Dendritic cell treated with granulocyte-macrophage colony-stimulating factor and Interleukin-4, amounts not matched to agents 40 ng/mL and 50 ng/mL, for 4 days (primary cell): ENCODE measurements at regions of chr7 and their contacts with region 1.

Region 1: DNA sequence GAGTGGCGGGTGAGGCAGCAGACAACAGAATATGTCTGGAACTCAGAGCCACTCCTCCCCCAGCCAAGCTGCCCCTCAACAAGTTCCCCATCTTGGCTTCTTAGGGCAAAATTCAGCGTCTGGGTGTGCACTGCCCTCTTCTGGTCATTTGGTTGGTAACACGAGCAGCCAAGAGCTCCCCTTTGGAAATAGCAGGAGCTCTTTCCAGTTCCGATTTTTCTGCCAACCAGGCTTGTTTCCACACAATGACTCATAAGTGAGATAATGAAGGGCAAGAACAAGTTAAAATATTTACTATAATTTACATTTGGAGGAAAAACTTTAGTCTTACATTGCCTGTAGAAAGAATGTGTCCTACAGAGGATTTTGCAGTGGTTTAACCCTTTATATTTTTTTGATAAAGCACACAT is 70.5 kb downstream of the ADCYAP1R1 start:
- H3K4me3 Mint-ChIP-seq: no peak overlapping the region
- H3K27ac Mint-ChIP-seq: no peak overlapping the region
- H3K4me1 Mint-ChIP-seq: peaks cover 3% of the 10 kb centered on the region
- H3K27me3 Mint-ChIP-seq: peaks cover 4% of the 10 kb centered on the region

Region 2: DNA sequence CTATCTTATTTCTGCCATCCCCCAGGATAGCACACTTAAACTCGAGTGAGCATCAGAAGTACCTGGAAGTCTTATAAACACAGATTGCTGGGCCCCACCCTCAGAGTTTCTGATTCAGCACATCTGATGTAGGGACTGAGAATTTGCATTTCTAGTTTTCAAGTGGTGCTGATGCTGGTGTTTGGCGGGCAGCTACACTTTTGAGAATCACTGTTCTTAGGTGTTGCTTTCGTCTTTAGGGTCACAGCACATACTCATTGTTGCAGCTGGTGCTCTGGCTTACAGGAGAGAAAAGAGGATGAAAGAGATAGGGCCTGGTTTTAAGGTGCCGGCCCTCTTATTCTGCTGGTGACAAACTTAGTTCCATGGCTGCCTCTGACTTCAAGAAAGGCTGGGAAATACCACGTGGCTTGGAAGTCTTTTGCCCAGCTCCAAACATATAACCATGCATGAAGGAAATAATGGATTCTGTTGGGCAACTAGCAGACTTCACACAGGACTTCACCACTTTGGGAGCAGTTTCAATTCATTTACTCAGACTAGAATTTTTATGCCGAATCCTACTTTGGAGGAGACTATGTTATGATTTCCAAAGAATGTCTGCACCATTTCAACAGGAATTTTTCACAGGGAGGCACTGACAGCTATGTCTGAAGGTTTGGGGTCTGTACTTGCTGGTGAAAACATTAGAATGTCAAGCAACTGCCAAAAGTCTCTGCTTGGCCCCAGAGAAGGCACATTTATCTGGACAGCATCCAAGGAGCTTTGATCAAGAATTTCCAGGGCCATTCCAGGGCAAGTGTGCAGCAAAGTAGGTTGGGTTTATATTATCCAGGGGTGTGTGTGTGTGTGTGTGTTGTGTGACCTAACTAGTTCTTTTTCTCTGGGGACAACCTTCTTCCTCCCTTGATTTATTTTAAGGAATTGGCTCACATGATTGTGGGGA is 358.4 kb before region 1 on chr7:
- intact Hi-C with region 1: no loop called
- H3K4me3 Mint-ChIP-seq: no peak overlapping the region
- H3K27ac Mint-ChIP-seq: no peak overlapping the region
- H3K4me1 Mint-ChIP-seq: no peaks in the 10 kb centered on the region
- H3K27me3 Mint-ChIP-seq: peaks cover 19% of the 10 kb centered on the region

Region 3: DNA sequence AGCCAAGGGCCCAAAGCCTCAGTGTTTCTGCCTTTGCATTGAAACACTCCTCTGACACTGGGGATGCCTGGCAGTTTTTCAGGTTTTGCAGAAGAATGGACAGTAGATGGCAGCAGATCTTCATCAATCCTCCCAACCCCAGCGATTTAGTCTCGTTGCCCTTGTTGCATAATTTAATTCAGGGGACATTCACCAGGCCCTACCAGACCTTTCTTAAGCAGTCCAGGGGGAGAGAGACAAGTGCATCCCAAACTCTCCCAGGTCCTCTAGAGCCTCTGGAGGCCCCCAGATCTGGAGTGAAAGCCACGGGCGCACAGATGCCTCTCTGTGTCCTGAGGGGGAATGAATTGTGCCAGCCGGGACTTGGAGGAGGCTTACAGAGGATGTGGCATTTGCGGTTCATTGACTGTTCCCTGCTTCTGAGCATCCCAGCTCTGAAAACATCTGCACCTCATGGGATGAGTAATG is 321.8 kb before region 1 on chr7:
- intact Hi-C with region 1: loop called (anchors 1 kb)
- H3K4me3 Mint-ChIP-seq: no peak overlapping the region
- H3K27ac Mint-ChIP-seq: no peak overlapping the region
- H3K4me1 Mint-ChIP-seq: peaks cover 4% of the 10 kb centered on the region
- H3K27me3 Mint-ChIP-seq: no peaks in the 10 kb centered on the region

Region 4: DNA sequence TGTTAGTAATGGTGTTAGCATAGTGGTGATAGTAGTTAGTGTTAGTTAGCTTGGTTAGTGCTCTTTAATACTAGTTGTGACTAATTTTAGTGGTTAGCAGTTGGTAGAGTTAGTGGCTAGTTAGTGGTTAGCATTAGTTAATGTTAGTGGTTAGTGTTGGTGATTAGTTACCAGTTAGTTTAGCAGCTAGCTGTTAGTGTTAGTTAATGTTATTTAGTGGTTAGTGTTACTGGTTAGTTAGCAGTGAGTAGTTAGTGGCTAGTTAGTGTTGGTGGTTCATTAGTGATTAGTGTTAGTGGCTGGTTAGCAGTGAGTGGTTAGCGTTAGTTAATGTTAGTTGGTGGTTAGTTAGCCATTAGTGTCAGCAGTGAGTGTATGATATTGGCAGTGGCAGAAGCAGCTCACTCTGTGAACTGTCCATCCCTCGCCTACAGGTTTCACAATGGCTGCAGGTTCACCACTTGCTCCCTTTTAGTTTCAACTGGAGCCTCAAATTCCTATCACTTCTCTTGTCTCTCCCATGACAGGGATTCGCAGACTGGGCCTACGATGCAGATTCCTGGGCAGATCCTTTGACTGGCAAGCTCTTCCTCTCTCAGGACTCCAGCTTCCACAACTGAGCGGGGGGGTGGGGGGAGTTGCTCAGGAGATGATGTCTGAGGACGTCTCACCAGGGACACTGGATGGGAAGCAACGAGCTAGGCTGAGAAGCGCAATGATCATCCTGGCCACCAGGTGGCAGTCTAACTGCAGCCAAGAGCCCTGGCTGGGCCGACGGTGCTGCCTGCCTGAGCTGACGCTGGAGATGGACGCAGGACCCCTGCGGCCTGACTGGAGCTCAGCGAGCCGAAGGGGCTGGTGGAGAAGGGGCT is 139.4 kb before region 1 on chr7:
- intact Hi-C with region 1: loop called (anchors 1 kb)
- H3K4me3 Mint-ChIP-seq: no peak overlapping the region
- H3K27ac Mint-ChIP-seq: no peak overlapping the region
- H3K4me1 Mint-ChIP-seq: peaks cover 2% of the 10 kb centered on the region
- H3K27me3 Mint-ChIP-seq: peaks cover 41% of the 10 kb centered on the region

Region 5: GRCh38 chr7:31883761-31884164 is 761.1 kb after region 1 on chr7:
- intact Hi-C with region 1: no loop called
- H3K4me3 Mint-ChIP-seq: no peak overlapping the region
- H3K27ac Mint-ChIP-seq: peak overlapping the region; percentile 51
- H3K4me1 Mint-ChIP-seq: peaks cover 17% of the 10 kb centered on the region
- H3K27me3 Mint-ChIP-seq: peaks cover 2% of the 10 kb centered on the region